ENCODE measurements at regions of chr7 and their contacts with region 1.

Region 1: DNA sequence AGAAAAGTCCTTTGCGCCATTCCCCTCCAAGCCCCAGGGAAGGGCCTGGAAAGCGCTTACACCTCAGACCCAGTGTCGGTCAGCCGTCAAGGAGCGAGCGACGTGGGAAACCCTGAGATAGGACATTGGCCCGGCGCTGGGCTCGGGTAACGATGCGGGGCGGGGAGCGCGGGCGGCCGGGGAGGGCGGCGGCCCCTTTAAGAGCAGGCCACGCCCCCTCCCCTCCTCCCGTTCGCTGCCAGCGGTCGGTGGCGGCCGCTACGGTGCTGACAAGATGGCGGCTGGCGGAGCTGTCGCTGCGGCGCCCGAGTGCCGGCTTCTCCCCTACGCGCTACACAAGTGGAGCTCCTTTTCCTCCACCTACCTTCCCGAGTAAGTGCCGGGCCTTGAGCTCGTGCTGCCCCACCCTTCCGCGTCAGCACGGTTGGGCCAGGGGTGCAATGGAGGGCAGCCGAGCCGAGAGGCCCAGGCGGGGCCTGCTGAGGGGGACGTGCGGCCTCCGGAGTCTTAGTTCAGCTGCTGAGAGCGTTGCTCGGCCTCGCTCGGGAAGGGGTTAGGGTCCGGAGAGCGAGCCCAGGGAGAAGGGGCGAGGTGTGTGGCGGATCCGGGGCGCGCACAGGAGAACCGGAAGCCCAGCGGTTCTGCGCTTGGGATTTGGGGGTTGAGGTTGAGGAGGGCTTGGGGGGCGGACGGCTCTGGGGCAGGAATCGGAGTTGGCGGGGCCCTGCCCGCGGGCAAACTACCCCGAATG is at the start of gene MKLN1:
- DNase-seq: peak; percentile 94 to 96
- ATAC-seq: peak; percentile 98 to 99 (median 98)
- H3K4me3 ChIP-seq: peak within 1 kb of the TSS; percentile 99
- H3K27ac ChIP-seq: peak within 1 kb of the TSS; percentile 99
- H3K4me1 ChIP-seq: peaks cover 33% of the 10 kb centered on the region
- H3K27me3 ChIP-seq: no peaks in the 10 kb centered on the region
- CTCF ChIP-seq: no peak
- total RNA-seq, gene MKLN1: 34.9 to 49.3 (median 45.3) TPM

Region 2: GRCh38 chr7:131076032-131076431 is 251.8 kb before region 1 on chr7:
- intact Hi-C with region 1: loop called in 1 of 2 experiments (anchors 5 kb)
- DNase-seq: no peak
- ATAC-seq: no peak
- H3K4me3 ChIP-seq: no peak overlapping the region
- H3K27ac ChIP-seq: peak overlapping the region; percentile 47
- H3K4me1 ChIP-seq: peaks cover 63% of the 10 kb centered on the region
- H3K27me3 ChIP-seq: no peaks in the 10 kb centered on the region
- CTCF ChIP-seq: no peak

Region 3: DNA sequence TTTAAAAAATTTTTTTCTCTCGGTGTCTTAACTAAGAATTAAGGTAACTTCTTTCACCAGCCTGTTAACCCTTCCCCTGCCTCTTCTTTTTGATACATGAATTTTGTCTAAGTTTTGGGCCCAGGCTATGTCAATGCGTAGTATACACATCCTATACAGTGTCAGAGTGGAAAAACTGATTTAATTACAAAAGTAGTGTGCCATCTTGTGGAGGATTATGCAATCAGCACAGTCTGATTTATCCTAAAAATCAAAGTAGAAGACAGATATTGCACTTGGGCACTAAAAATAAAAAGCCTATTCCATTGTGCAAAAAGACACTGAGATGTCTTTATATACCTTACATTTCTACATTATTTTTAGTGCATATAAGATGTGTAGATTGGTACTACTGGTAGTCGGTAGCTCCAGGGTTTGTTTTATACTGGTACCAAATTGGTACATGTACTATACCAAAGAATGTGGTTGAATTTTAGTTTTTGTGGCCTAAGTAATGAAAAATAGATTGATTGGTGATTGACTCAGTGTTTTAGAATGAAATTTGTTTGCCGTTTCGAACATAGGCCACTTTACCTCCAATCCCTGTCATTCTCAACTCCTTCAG is 96.5 kb after region 1 on chr7:
- intact Hi-C with region 1: loop called in 1 of 2 experiments (anchors 5 kb)
- DNase-seq: no peak
- ATAC-seq: peak; percentile 57 to 67 (median 62)
- H3K4me3 ChIP-seq: no peak overlapping the region
- H3K27ac ChIP-seq: no peak overlapping the region
- H3K4me1 ChIP-seq: peaks cover 23% of the 10 kb centered on the region
- H3K27me3 ChIP-seq: no peaks in the 10 kb centered on the region
- CTCF ChIP-seq: peak; percentile 59

Measured in psoas muscle (tissue), 8 donors.